ENCODE measurements at regions of chr2 and their contacts with region 1.

Region 1: GRCh38 chr2:231786177-231786916 is at the start of gene COPS7B:
- DNase-seq: peak; percentile 57 to 88 (median 81)
- ATAC-seq: peak; percentile 64
- H3K4me3 ChIP-seq: peak within 1 kb of the TSS; percentile 75 to 95
- H3K4me3 Mint-ChIP-seq: peak within 1 kb of the TSS; percentile 93
- H3K27ac ChIP-seq: peak within 1 kb of the TSS; percentile 59 to 73
- H3K27ac Mint-ChIP-seq: peak within 1 kb of the TSS; percentile 84
- H3K4me1 ChIP-seq: peaks cover 48% of the 10 kb centered on the region
- H3K4me1 Mint-ChIP-seq: peaks cover 76% of the 10 kb centered on the region
- H3K27me3 ChIP-seq: no peaks in the 10 kb centered on the region
- H3K27me3 Mint-ChIP-seq: no peaks in the 10 kb centered on the region
- CTCF ChIP-seq: peak; percentile 66
- total RNA-seq, gene COPS7B: 35.0 to 36.8 TPM

Region 2: DNA sequence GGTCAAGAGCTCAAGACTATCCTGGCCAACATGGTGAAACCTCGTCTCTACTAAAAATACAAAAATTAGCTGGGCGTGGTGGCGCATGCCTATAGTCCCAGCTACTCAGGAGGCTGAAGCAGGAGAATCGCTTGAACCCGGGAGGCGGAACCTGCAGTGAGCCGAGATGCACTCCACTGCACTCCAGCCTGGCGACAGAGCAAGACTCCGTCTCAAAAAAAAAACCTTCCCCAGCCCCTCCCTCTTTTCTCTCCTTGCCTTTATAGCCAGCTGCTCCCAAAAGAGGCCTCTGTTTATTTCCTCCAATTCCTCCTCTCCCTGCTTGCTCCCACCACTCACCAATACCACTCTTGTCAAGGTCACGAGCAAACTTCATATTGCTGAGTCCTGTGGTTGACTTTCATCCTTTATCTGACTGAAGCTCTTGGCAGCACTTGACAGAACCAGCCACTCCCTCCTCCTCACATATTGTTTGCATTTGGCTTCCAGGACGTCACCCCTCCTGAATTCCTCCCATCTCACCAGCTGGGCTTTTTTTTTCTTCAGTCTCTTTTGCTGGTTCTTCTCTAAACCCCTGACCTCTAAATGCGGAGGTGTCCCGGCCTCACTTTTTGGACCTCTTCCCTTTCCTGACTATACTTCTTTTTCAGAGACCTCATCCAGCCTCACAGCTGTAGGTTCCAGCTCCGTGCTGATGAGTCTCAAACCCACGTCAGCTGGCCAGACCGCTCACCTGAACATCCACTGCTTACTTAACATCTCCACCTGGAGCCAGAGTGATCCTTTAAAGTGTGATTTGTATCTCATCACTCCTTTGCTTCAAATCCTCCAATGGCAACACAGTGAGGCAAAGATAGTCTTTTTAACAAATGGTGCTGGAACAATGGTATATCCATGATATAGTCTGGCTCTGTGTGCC is 1158.3 kb before region 1 on chr2:
- CTCF ChIA-PET with region 1: no interaction called
- POLR2A ChIA-PET with region 1: no interaction called
- intact Hi-C with region 1: no loop called
- DNase-seq: no peak
- ATAC-seq: no peak
- H3K4me3 ChIP-seq: no peak overlapping the region
- H3K4me3 Mint-ChIP-seq: no peak overlapping the region
- H3K27ac ChIP-seq: no peak overlapping the region
- H3K27ac Mint-ChIP-seq: no peak overlapping the region
- H3K4me1 ChIP-seq: no peaks in the 10 kb centered on the region
- H3K4me1 Mint-ChIP-seq: peaks cover 14% of the 10 kb centered on the region
- H3K27me3 ChIP-seq: no peaks in the 10 kb centered on the region
- H3K27me3 Mint-ChIP-seq: no peaks in the 10 kb centered on the region
- CTCF ChIP-seq: no peak

Region 3: GRCh38 chr2:231612179-231613053 is 173.9 kb before region 1 on chr2:
- CTCF ChIA-PET with region 1: interaction called, 3 read pairs
- POLR2A ChIA-PET with region 1: no interaction called
- intact Hi-C with region 1: loop called (anchors 5 to 10 kb)
- DNase-seq: peak; percentile 73 to 92 (median 88)
- ATAC-seq: peak; percentile 78
- H3K4me3 ChIP-seq: peak overlapping the region in 1 of 2 experiments; percentile 55
- H3K4me3 Mint-ChIP-seq: peak overlapping the region; percentile 88
- H3K27ac ChIP-seq: peak overlapping the region in 1 of 2 experiments; percentile 17
- H3K27ac Mint-ChIP-seq: peak overlapping the region; percentile 42
- H3K4me1 ChIP-seq: peaks cover 16% of the 10 kb centered on the region
- H3K4me1 Mint-ChIP-seq: peaks cover 23% of the 10 kb centered on the region
- H3K27me3 ChIP-seq: peaks cover 0 to 5% of the 10 kb centered on the region in 2 experiments
- H3K27me3 Mint-ChIP-seq: no peaks in the 10 kb centered on the region
- CTCF ChIP-seq: peak; percentile 82

Region 4: GRCh38 chr2:231732604-231733003 is 53.7 kb before region 1 on chr2:
- CTCF ChIA-PET with region 1: no interaction called
- POLR2A ChIA-PET with region 1: no interaction called
- intact Hi-C with region 1: no loop called
- DNase-seq: no peak
- ATAC-seq: no peak
- H3K4me3 ChIP-seq: no peak overlapping the region
- H3K4me3 Mint-ChIP-seq: no peak overlapping the region
- H3K27ac ChIP-seq: no peak overlapping the region
- H3K27ac Mint-ChIP-seq: no peak overlapping the region
- H3K4me1 ChIP-seq: no peaks in the 10 kb centered on the region
- H3K4me1 Mint-ChIP-seq: no peaks in the 10 kb centered on the region
- H3K27me3 ChIP-seq: no peaks in the 10 kb centered on the region
- H3K27me3 Mint-ChIP-seq: no peaks in the 10 kb centered on the region
- CTCF ChIP-seq: no peak

Region 5: GRCh38 chr2:231810905-231811304 is 24.6 kb after region 1 on chr2:
- CTCF ChIA-PET with region 1: no interaction called
- POLR2A ChIA-PET with region 1: no interaction called
- intact Hi-C with region 1: no loop called
- DNase-seq: no peak
- ATAC-seq: no peak
- H3K4me3 ChIP-seq: no peak overlapping the region
- H3K4me3 Mint-ChIP-seq: no peak overlapping the region
- H3K27ac ChIP-seq: no peak overlapping the region
- H3K27ac Mint-ChIP-seq: no peak overlapping the region
- H3K4me1 ChIP-seq: no peaks in the 10 kb centered on the region
- H3K4me1 Mint-ChIP-seq: no peaks in the 10 kb centered on the region
- H3K27me3 ChIP-seq: no peaks in the 10 kb centered on the region
- H3K27me3 Mint-ChIP-seq: no peaks in the 10 kb centered on the region
- CTCF ChIP-seq: no peak

Measured in CD8-positive, alpha-beta T cell (primary cell).